ENCODE measurements at regions of chr2 and their contacts with region 1.

Region 1: DNA sequence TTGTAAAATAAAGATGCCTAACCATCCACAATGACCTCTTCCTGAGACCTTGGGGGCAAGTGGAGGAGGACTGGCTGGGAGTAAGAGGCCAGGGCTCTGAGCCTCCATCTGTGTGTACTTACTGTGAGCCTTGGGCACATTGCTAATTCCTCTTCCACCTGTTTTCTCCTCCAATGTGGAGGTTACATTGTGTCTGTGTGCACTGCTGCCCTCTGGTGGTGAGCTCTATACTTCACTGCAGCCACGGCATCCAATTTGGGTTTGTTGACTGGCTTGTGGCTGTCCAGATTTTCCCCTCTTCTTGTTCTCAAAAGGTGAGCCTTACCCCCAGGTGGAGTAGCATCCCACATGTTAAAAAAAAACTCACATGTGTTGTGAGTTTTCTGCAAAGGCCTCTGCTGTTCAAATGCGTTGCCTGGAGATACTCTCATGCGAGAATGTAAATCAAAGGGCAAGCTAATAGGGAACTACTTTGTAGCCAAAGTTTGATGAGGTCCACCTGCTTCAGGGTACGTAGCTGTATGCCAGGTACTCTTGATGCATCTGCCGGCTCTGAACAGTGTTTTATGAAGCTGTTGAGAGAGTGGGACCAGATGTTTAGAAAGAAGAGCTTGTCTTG is 80.8 kb downstream of the APOB start:
- DNase-seq: peak; percentile 81
- ATAC-seq: peak; percentile 47
- H3K4me3 Mint-ChIP-seq: no peak overlapping the region
- H3K27ac Mint-ChIP-seq: no peak overlapping the region
- H3K4me1 Mint-ChIP-seq: no peaks in the 10 kb centered on the region
- H3K27me3 Mint-ChIP-seq: peaks cover 8% of the 10 kb centered on the region
- CTCF ChIP-seq: peak; percentile 77

Region 2: GRCh38 chr2:20650880-20651730 is 311.9 kb before region 1 on chr2 and contains the start of gene HS1BP3:
- CTCF ChIA-PET with region 1: interaction called, 23 read pairs
- POLR2A ChIA-PET with region 1: no interaction called
- intact Hi-C with region 1: no loop called
- DNase-seq: peak; percentile 85
- ATAC-seq: peak; percentile 97
- H3K4me3 Mint-ChIP-seq: peak within 1 kb of the TSS; percentile 77
- H3K27ac Mint-ChIP-seq: peak within 1 kb of the TSS; percentile 85
- H3K4me1 Mint-ChIP-seq: peaks cover 17% of the 10 kb centered on the region
- H3K27me3 Mint-ChIP-seq: no peaks in the 10 kb centered on the region
- CTCF ChIP-seq: peak; percentile 83
- total RNA-seq, gene HS1BP3: 6.5 to 7.9 TPM

Region 3: DNA sequence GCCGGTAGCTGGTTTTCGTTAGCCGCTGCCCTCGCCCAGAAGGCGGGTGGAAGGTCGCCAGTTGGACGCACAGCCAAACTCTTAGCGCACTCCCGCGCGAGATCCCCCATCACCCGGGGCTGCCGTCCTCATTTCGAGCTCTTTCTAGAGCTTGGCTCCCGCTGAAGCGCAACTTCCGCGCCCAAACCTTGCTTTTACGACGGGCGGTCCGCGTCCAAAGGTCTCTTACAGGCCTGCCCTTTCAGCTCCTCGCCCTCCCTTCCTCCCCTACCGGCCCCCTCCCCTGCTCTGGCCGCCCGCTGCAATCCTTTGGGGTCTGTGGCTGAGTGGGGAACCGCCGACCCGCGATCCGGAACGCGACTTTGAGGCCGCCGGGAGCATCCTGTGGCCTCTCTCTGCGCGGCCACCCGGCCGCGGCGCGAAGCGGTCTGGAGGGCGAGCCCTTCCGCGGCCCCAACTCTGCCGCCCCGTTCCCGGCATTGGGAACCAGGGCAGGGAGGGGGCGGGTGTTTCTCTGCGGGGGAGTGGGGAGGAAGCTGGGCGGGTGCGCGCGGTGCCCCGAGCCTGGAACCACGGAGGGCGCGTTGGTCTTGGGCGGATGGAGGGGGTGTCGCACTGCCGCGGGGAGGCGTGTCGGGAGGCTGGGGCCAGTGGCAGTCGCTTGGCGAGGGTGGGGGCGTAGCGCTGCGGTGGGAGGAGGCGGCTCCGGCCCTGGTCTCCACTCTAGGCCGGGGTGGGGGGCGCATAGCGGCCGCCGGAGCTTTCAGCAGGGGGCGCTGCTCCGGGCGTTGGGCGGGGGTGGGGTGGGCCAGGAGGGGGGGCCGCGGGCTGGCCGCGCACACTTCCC is 296.5 kb before region 1 on chr2 and contains the start of gene GDF7:
- CTCF ChIA-PET with region 1: interaction called, 186 read pairs
- POLR2A ChIA-PET with region 1: no interaction called
- intact Hi-C with region 1: loop called (anchors 1 kb)
- DNase-seq: peak; percentile 37
- ATAC-seq: peak; percentile 50
- H3K4me3 Mint-ChIP-seq: peak within 1 kb of the TSS; percentile 63
- H3K27ac Mint-ChIP-seq: no peak within 1 kb of the TSS
- H3K4me1 Mint-ChIP-seq: peaks cover 16% of the 10 kb centered on the region
- H3K27me3 Mint-ChIP-seq: peaks cover 71% of the 10 kb centered on the region
- CTCF ChIP-seq: no peak
- total RNA-seq, gene GDF7: not detected

Region 4: GRCh38 chr2:20675701-20676352 is 287.2 kb before region 1 on chr2:
- CTCF ChIA-PET with region 1: interaction called, 9 read pairs
- POLR2A ChIA-PET with region 1: no interaction called
- intact Hi-C with region 1: loop called (anchors 5 kb)
- DNase-seq: peak; percentile 27
- ATAC-seq: peak; percentile 61
- H3K4me3 Mint-ChIP-seq: no peak overlapping the region
- H3K27ac Mint-ChIP-seq: no peak overlapping the region
- H3K4me1 Mint-ChIP-seq: no peaks in the 10 kb centered on the region
- H3K27me3 Mint-ChIP-seq: peaks cover 18% of the 10 kb centered on the region
- CTCF ChIP-seq: no peak

Region 5: DNA sequence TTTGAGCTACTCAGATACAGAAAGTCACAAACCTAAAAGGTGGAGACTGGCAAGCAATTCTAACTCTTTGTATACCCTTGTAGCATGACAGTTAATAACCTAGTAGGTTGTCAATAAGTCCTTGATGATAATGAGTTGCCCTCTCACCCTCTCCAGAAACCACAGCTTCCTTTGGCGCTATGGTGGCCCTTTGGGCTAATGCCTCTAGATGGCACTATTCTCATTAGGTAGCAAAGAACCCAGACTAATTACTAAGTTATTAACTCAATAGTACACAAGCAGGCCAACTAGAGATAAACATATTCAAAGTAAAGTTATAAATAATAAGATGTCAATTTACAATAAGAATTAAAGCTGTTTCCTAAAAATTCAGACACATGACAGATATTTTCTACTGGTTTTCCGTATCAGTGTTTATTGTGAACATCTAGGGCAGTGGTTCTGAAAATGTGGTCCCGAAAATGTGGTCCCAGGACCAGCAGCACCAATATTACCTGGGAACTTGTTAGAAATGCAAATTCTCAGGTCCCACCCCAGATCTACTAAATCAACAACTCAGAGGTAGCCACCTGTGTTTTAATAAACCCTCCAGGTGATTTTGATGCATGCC is 181.3 kb before region 1 on chr2:
- CTCF ChIA-PET with region 1: interaction called, 33 read pairs
- POLR2A ChIA-PET with region 1: no interaction called
- intact Hi-C with region 1: loop called (anchors 5 kb)
- DNase-seq: peak; percentile 7
- ATAC-seq: no peak
- H3K4me3 Mint-ChIP-seq: no peak overlapping the region
- H3K27ac Mint-ChIP-seq: no peak overlapping the region
- H3K4me1 Mint-ChIP-seq: no peaks in the 10 kb centered on the region
- H3K27me3 Mint-ChIP-seq: no peaks in the 10 kb centered on the region
- CTCF ChIP-seq: peak; percentile 32

Region 6: DNA sequence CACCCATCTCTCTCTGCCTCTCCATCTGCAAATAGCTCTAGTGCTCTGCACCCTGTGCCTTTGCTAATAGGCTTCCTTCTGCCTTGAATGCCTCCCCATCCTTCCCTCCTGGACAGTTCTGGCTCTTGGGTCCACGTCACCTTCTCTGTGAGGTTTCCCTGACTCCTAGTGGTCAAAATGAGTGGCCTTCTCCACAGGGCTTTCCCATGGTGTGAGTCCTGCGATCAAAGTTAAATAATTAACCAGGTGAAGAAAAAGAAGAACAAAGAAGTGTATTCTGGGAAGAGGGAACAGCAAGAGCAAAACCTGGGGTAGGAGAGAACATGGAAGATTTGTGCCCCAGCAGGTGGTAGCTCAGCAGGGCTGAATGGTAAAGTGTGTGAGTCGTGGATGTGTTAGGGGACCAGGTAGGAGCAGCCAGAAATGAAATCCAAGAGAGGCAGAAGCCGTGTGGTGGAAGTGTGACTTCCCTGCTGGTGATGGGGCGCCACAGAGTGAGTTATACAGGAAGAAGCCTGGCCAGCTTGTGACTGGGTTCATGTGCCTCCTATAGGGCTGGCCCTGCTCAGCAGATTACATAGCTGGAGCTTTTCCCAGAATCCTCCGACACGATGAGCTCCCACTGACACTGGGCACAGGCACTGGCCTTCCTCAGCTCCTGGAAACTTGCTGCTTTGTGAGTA is 46.3 kb before region 1 on chr2:
- CTCF ChIA-PET with region 1: no interaction called
- POLR2A ChIA-PET with region 1: no interaction called
- intact Hi-C with region 1: no loop called
- DNase-seq: no peak
- ATAC-seq: no peak
- H3K4me3 Mint-ChIP-seq: no peak overlapping the region
- H3K27ac Mint-ChIP-seq: no peak overlapping the region
- H3K4me1 Mint-ChIP-seq: no peaks in the 10 kb centered on the region
- H3K27me3 Mint-ChIP-seq: peaks cover 20% of the 10 kb centered on the region
- CTCF ChIP-seq: no peak

Region 7: DNA sequence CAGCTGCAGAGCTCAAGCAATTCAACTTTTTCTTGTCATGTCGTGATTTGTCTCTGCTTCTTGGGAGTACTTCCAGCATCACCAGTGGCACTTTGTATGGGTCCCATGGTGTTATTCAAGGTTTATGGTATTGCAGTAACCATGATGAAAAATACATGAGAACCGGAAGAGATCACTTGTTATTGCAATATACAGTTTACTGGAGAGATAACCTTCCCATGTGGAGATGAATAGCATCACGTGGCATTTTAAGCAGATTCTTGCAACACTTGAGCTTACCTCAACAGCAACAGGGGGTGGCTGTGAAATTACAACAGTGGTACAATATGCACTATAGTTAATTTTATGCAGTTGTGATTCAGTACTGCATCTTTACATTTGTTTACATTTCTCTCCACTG is 16.6 kb before region 1 on chr2:
- CTCF ChIA-PET with region 1: interaction called, 16 read pairs
- POLR2A ChIA-PET with region 1: no interaction called
- intact Hi-C with region 1: no loop called
- DNase-seq: no peak
- ATAC-seq: no peak
- H3K4me3 Mint-ChIP-seq: no peak overlapping the region
- H3K27ac Mint-ChIP-seq: no peak overlapping the region
- H3K4me1 Mint-ChIP-seq: no peaks in the 10 kb centered on the region
- H3K27me3 Mint-ChIP-seq: peaks cover 2% of the 10 kb centered on the region
- CTCF ChIP-seq: no peak